Activated CD4-positive, alpha-beta T cell treated with anti-CD3 and anti-CD28 coated beads for 36 hours (primary cell): ENCODE measurements at regions of chr15 and their contacts with region 1.

Region 1: GRCh38 chr15:88246666-88247446 is 9.7 kb downstream of the NTRK3 start:
- DNase-seq: peak; percentile 82
- ATAC-seq: peak; percentile 92
- H3K4me3 Mint-ChIP-seq: no peak overlapping the region
- H3K27ac Mint-ChIP-seq: no peak overlapping the region
- H3K4me1 Mint-ChIP-seq: peaks cover 5% of the 10 kb centered on the region
- H3K27me3 Mint-ChIP-seq: peaks cover 2% of the 10 kb centered on the region

Region 2: GRCh38 chr15:86624261-86625036 is 1622.4 kb before region 1 on chr15:
- CTCF ChIA-PET with region 1: no interaction called
- POLR2A ChIA-PET with region 1: no interaction called
- intact Hi-C with region 1: loop called in 1 of 2 experiments (anchors 2 kb)
- DNase-seq: peak; percentile 90
- ATAC-seq: peak; percentile 100
- H3K4me3 Mint-ChIP-seq: peak overlapping the region; percentile 15
- H3K27ac Mint-ChIP-seq: peak overlapping the region; percentile 53
- H3K4me1 Mint-ChIP-seq: peaks cover 42% of the 10 kb centered on the region
- H3K27me3 Mint-ChIP-seq: peaks cover 4% of the 10 kb centered on the region

Region 3: GRCh38 chr15:86915811-86916331 is 1331.0 kb before region 1 on chr15:
- CTCF ChIA-PET with region 1: no interaction called
- POLR2A ChIA-PET with region 1: no interaction called
- intact Hi-C with region 1: loop called in 1 of 2 experiments (anchors 10 kb)
- DNase-seq: peak; percentile 4
- ATAC-seq: no peak
- H3K4me3 Mint-ChIP-seq: no peak overlapping the region
- H3K27ac Mint-ChIP-seq: no peak overlapping the region
- H3K4me1 Mint-ChIP-seq: no peaks in the 10 kb centered on the region
- H3K27me3 Mint-ChIP-seq: peaks cover 5% of the 10 kb centered on the region

Region 4: GRCh38 chr15:88258093-88258641 is 11.3 kb after region 1 on chr15:
- CTCF ChIA-PET with region 1: interaction called, 15 read pairs
- POLR2A ChIA-PET with region 1: no interaction called
- intact Hi-C with region 1: no loop called
- DNase-seq: peak; percentile 59
- ATAC-seq: no peak
- H3K4me3 Mint-ChIP-seq: peak overlapping the region; percentile 64
- H3K27ac Mint-ChIP-seq: no peak overlapping the region
- H3K4me1 Mint-ChIP-seq: peaks cover 23% of the 10 kb centered on the region
- H3K27me3 Mint-ChIP-seq: peaks cover 50% of the 10 kb centered on the region

Region 5: DNA sequence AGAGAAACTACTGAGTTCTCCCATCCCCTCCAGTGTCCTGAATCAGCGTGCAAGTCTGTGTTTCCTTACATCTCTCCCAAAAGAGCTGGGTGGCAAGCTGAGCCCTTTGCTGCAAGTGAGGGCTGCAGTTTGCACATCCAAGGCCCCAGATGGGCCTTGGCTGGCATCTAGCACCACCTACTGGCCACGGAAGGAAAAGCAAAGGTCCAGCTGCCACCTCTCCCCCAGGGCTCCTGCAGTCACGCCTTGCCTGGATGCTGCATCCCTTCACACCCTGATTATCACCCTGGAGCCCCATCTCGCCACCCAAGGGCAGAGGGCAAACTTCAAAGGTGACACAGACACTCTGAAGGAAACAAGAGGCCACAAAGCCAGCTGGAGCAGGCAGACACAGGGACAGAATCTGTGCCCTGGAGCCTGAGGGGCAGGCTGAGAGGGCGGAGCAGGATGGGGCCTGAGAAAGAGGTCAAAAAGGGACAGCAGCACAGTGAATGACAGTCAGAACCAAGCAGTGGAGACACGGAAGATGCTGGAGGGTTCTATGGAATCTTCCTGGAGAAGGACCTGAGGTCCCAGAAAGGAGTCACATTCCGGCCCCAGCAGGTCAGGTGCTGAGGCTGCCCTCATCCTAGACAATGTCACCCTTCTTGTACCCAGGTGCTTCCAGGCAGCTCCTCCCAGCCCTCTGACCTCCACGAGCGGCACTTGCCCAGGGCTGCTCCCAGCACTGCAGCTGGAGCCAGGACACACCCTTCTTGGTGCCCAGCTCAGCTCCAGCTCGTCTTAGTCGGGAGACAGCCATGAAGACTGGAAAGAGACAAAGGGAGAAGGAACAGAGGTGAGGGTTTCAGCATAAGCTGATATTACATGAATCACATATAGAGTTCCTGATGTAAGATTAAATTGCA is 28.0 kb after region 1 on chr15:
- CTCF ChIA-PET with region 1: interaction called, 56 read pairs
- POLR2A ChIA-PET with region 1: no interaction called
- intact Hi-C with region 1: loop called in 1 of 2 experiments (anchors 1 kb)
- DNase-seq: peak; percentile 81
- ATAC-seq: peak; percentile 82
- H3K4me3 Mint-ChIP-seq: no peak overlapping the region
- H3K27ac Mint-ChIP-seq: no peak overlapping the region
- H3K4me1 Mint-ChIP-seq: no peaks in the 10 kb centered on the region
- H3K27me3 Mint-ChIP-seq: peaks cover 16% of the 10 kb centered on the region

Region 6: DNA sequence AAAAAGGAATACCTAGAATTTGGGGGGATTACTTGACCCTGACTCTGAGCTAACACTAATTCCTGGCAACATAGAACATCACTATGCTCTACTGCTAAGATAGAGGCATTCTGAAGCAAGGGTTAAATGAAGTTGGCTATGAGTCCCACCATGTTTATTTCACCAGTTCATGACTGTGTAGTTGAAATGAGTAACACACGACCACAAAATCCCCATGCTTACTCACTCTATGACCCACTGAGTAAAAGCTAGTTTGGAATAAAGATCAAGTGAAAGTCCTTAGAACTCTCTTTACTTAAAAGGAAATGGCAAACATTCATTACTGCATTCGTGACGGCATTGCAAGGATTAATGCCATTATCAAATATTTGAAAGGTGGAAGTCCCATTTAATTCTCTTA is 173.0 kb after region 1 on chr15:
- CTCF ChIA-PET with region 1: no interaction called
- POLR2A ChIA-PET with region 1: no interaction called
- intact Hi-C with region 1: no loop called
- DNase-seq: no peak
- ATAC-seq: peak; percentile 97
- H3K4me3 Mint-ChIP-seq: no peak overlapping the region
- H3K27ac Mint-ChIP-seq: no peak overlapping the region
- H3K4me1 Mint-ChIP-seq: peaks cover 17% of the 10 kb centered on the region
- H3K27me3 Mint-ChIP-seq: peaks cover 31% of the 10 kb centered on the region